ENCODE measurements at regions of chr16 and their contacts with region 1.

Region 1: GRCh38 chr16:10752843-10753523 is 9.3 kb downstream of the NUBP1 start:
- DNase-seq: no peak
- H3K4me3 ChIP-seq: no peak overlapping the region
- H3K27ac ChIP-seq: no peak overlapping the region
- H3K4me1 ChIP-seq: no peaks in the 10 kb centered on the region
- H3K27me3 ChIP-seq: no peaks in the 10 kb centered on the region
- CTCF ChIP-seq: no peak
- EP300 ChIP-seq: no peak
- POLR2A ChIP-seq: no peak
- RAD21 ChIP-seq: no peak

Region 2: GRCh38 chr16:10668322-10669045 is 84.5 kb before region 1 on chr16:
- CTCF ChIA-PET with region 1: no interaction called
- POLR2A ChIA-PET with region 1: no interaction called
- DNase-seq: peak in 1 of 2 experiments; percentile 57
- H3K4me3 ChIP-seq: no peak overlapping the region
- H3K27ac ChIP-seq: no peak overlapping the region
- H3K4me1 ChIP-seq: peaks cover 0 to 3% (median under 1%) of the 10 kb centered on the region in 4 experiments; a peak in 3 of 7 replicates
- H3K27me3 ChIP-seq: no peaks in the 10 kb centered on the region
- CTCF ChIP-seq: peak; percentile 57 to 80 (median 79)
- EP300 ChIP-seq: no peak
- POLR2A ChIP-seq: no peak
- RAD21 ChIP-seq: peak; percentile 54 to 57

Region 3: GRCh38 chr16:10906914-10907756 is 154.2 kb after region 1 on chr16:
- CTCF ChIA-PET with region 1: interaction called, 10 read pairs
- POLR2A ChIA-PET with region 1: no interaction called
- DNase-seq: no peak
- H3K4me3 ChIP-seq: no peak overlapping the region
- H3K27ac ChIP-seq: no peak overlapping the region
- H3K4me1 ChIP-seq: no peaks in the 10 kb centered on the region
- H3K27me3 ChIP-seq: no peaks in the 10 kb centered on the region; a peak in 1 of 7 replicates
- CTCF ChIP-seq: no peak
- EP300 ChIP-seq: no peak
- POLR2A ChIP-seq: no peak
- RAD21 ChIP-seq: no peak

Measured in H1 (cell line).